ENCODE measurements at regions of chrX and their contacts with region 1.

Region 1: DNA sequence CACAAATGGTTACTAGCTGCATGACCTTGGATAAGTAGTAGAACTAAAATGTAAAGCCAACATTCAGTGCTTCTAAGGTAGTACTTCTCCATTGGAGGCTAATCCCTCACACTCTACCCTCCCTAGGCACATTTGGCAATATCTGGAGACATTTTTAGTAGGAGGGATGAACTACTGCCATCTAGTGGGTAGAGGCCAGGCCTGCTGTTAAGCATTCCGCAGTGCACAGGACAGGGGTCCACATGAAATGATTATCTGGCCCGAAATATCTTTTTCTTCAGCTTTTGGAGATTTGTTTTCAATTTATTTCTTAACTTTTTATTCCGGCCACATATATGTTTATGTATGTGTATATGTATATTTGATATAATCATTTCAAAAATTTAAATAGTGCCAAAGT is 36.0 kb upstream of the SPANXC start:
- DNase-seq: peak; percentile 4
- ATAC-seq: no peak
- H3K4me3 Mint-ChIP-seq: no peak overlapping the region
- H3K27ac Mint-ChIP-seq: no peak overlapping the region
- H3K4me1 Mint-ChIP-seq: no peaks in the 10 kb centered on the region
- H3K27me3 Mint-ChIP-seq: no peaks in the 10 kb centered on the region

Region 2: GRCh38 chrX:140762061-140762460 is 516.2 kb before region 1 on chrX:
- CTCF ChIA-PET with region 1: interaction called, 11 read pairs
- POLR2A ChIA-PET with region 1: no interaction called
- intact Hi-C with region 1: loop called (anchors 2 to 10 kb)
- DNase-seq: peak; percentile 55
- ATAC-seq: peak; percentile 53
- H3K4me3 Mint-ChIP-seq: no peak overlapping the region
- H3K27ac Mint-ChIP-seq: no peak overlapping the region
- H3K4me1 Mint-ChIP-seq: peaks cover 12% of the 10 kb centered on the region
- H3K27me3 Mint-ChIP-seq: peaks cover 6% of the 10 kb centered on the region

Region 3: DNA sequence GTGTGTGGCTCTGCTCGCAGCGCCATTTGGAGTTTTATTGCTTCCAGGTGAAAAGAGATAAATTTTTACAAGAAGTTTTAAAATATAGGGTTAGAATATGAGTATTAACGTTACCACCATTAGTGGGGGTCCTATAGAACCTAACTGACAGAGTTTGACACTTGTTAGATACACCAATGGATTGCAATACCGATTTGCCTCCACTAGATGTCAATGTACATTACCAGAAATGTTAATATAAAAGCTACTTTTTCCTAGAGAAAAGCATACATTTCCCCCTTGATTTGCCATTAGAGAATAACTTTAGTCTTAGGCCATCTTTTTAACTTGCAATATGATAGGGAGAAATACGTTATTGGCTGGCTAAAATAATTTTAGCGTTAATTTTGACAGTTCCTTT is 460.4 kb before region 1 on chrX:
- CTCF ChIA-PET with region 1: no interaction called
- POLR2A ChIA-PET with region 1: no interaction called
- intact Hi-C with region 1: loop called in 1 of 2 experiments (anchors 5 kb)
- DNase-seq: no peak
- ATAC-seq: no peak
- H3K4me3 Mint-ChIP-seq: no peak overlapping the region
- H3K27ac Mint-ChIP-seq: no peak overlapping the region
- H3K4me1 Mint-ChIP-seq: peaks cover 8% of the 10 kb centered on the region
- H3K27me3 Mint-ChIP-seq: peaks cover 2% of the 10 kb centered on the region

Region 4: GRCh38 chrX:141258080-141258479 is 20.2 kb before region 1 on chrX:
- CTCF ChIA-PET with region 1: no interaction called
- POLR2A ChIA-PET with region 1: no interaction called
- intact Hi-C with region 1: no loop called
- DNase-seq: no peak
- ATAC-seq: no peak
- H3K4me3 Mint-ChIP-seq: no peak overlapping the region
- H3K27ac Mint-ChIP-seq: no peak overlapping the region
- H3K4me1 Mint-ChIP-seq: no peaks in the 10 kb centered on the region
- H3K27me3 Mint-ChIP-seq: no peaks in the 10 kb centered on the region